Activated T-helper 1 cell treated with anti-CD3 and anti-CD28 coated beads, Interleukin-12 subunit alpha, Interleukin-12 subunit beta, Interleukin-2, Interleukin-4 antibody, amounts not matched to agents 30 ng/mL and 10 ng/mL and 1 ng/mL, durations not matched to agents 14 hours and 24 hours and 36 hours (primary cell): ENCODE measurements at regions of chr4 and their contacts with region 1.

Region 1: DNA sequence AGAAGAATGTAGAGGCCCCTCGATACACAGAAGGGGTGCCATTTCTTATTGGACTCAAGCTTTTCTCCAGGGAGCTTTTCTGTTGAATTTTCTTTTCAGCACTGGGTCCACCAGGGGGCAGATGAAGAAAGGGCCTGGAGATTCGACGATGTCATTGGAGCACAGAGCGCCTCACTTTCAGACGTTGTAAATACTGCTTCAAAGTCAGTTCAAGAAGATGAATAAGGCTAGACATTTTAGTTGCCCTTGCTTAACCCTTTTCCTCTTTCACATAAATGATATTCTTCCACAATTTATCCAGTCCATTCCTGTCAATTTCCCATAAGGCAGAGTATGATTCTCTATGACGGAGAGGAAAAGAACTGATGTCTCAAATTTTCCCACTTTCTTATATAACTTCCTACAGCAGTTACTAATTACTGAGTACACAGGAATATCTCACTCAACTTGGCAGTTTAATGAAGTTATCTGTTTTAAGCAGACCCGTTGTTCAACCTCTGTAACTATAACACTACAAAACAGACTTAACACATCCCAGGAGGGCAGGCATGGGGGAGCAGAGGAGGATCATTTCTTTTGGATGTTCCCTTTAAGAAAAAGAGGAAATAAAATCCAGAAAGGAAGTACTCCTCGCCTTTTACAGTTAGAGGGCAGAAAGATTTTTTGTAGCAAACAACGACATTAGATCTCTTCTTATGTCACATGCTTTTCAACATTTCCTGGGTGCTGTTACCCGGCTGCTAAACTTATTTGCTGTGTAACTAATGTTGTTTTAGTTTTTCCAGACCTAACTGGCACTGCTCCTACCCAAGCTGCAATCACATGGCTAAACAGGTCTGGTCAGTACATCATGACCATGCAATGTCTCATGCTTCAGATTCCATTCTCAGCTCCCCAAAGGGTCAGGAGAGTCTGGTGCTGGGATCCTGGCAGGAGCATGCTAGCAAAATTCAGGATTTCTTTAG is 12.2 kb upstream of the CENPU start:
- DNase-seq: peak; percentile 55
- H3K4me3 Mint-ChIP-seq: peak overlapping the region; percentile 16
- H3K27ac Mint-ChIP-seq: peak overlapping the region; percentile 27
- H3K4me1 Mint-ChIP-seq: peaks cover 21% of the 10 kb centered on the region
- H3K27me3 Mint-ChIP-seq: no peaks in the 10 kb centered on the region

Region 2: GRCh38 chr4:184907216-184907615 is 161.1 kb after region 1 on chr4:
- intact Hi-C with region 1: loop called (anchors 1 kb)
- DNase-seq: no peak
- H3K4me3 Mint-ChIP-seq: no peak overlapping the region
- H3K27ac Mint-ChIP-seq: no peak overlapping the region
- H3K4me1 Mint-ChIP-seq: peaks cover 15% of the 10 kb centered on the region
- H3K27me3 Mint-ChIP-seq: peaks cover 5% of the 10 kb centered on the region

Region 3: GRCh38 chr4:184983672-184984356 is 237.7 kb after region 1 on chr4:
- intact Hi-C with region 1: loop called (anchors 1 kb)
- DNase-seq: peak; percentile 39
- H3K4me3 Mint-ChIP-seq: no peak overlapping the region
- H3K27ac Mint-ChIP-seq: no peak overlapping the region
- H3K4me1 Mint-ChIP-seq: no peaks in the 10 kb centered on the region
- H3K27me3 Mint-ChIP-seq: peaks cover 11% of the 10 kb centered on the region

Region 4: GRCh38 chr4:185096032-185096653 is 350.0 kb after region 1 on chr4:
- intact Hi-C with region 1: loop called (anchors 1 kb)
- DNase-seq: no peak
- H3K4me3 Mint-ChIP-seq: no peak overlapping the region
- H3K27ac Mint-ChIP-seq: no peak overlapping the region
- H3K4me1 Mint-ChIP-seq: no peaks in the 10 kb centered on the region
- H3K27me3 Mint-ChIP-seq: peaks cover 17% of the 10 kb centered on the region